Cardiac septum (tissue), 1 donor: ENCODE measurements at regions of chr1 and their contacts with region 1.

Region 1: GRCh38 chr1:203996126-203996525 is 76.8 kb upstream of the SOX13 start:
- DNase-seq: no peak

Region 2: DNA sequence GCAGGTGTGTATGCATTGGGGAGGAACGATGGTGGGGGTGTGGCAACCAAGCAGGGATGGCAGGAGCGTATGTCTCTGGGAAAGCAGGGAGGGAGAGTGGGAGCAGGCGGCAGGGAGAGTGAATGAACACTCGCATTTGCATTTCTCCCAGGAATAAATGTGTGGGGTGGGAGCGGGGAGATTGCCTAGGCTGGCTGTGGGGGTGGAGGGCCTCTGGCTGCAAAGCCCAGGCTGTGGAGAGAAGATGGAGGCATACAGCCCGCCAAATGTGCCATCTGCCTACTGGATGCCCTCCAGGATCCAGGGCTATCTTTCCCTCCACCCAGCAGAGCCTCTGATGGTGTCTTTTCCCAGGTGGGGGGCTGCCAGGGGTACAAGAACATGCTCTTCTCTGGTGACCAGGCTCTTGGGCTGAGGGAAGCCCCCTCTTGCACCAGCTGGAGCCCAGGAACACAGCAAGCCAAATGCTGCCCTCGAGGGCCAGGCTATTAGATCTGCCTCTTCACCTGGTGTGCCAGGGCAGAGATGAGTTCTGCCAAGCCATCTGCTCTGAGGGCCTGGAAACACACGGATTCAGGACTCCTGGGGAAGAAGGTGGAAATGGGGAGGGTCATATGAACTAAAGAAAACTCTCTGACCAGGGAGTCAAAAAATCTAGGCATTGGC is 503.9 kb before region 1 on chr1:
- intact Hi-C with region 1: no loop called
- DNase-seq: no peak

Region 3: DNA sequence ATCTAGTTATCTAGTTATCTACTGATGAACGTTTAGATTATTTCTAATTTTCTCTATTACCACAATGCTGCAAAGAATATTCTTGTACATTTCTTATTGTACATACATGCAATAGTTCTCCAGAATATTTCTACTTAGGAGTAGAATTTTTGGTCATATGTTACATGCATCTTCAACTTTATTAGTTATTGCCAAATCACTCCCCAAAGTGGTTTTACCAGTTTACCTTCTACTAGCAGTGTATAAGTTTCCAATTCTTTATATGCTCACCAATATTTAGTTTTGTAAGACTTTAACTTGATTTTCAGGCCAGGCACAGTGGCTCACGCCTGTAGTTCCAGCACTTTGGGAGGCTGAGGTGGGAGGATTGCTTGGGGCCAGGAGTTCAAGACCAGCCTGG is 79.4 kb before region 1 on chr1:
- intact Hi-C with region 1: no loop called
- DNase-seq: no peak

Region 4: DNA sequence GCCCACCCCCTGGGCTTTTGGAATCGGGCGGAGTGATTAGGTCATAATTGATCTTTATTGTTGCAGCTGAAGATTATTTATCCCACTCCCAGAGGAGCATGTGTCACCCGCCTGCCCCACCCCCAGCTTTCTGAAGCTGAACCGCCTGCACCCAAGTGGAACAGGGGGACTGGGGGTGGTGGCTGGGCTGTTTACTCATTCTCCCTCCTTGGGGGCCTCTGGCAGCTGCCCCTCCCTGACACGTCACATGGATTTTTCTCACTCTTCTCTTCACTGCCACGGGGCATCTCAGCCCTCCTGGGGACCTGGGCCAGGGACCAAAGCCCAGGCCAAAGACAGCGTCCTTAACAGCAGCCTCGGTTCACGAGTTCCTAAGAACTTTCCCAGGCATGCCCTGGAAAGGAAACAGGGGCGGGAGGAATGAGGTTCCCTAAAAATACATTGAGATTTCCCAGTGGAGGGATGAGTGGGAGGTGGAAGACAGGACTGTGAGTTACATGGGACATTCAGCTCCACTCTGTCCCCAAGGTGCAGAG is 45.2 kb after region 1 on chr1:
- intact Hi-C with region 1: loop called (anchors 5 kb)
- DNase-seq: no peak